GM23248 (cell line): ENCODE measurements at regions of chr2 and their contacts with region 1.

Region 1: DNA sequence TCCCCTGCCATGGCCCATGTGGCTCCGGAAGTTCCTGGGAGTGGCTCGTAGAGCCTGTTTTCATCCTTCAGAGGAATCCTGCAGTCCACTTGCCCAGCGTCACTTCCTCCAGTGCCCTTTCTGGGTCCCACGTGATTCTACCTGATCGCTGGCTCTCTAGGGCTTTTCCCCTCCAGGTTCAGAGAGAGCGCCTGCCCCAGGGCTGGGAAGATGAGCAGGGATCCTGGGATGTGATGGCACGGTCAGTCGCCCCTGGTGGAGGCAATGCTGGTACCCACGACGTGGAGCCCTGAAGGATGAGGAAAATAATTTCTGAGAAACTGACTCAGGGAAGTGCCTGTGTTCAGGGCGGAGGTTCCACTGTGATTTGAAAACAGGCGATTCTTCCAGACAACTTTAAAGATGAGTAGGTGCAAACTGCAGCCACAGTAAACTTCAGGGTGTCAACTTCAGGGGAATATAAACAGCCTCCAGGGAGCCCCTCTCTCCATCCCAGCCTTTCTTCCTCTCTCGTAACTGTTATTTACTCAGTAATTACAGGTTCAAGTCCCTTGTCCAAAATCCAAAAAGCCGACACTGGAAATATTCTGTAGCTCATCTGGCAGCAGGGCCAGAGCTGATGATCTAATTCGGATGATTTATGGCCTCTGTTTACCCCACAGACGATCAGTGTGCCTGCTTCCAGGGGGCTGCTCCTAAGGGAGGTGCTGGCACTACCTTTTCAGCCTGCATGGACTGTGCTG is 105.9 kb downstream of the AGAP1 start:
- DNase-seq: no peak
- H3K4me3 ChIP-seq: no peak overlapping the region
- H3K27ac ChIP-seq: no peak overlapping the region
- H3K4me1 ChIP-seq: peaks cover under 1% of the 10 kb centered on the region; the same call in 1 of the 2 replicates
- H3K27me3 ChIP-seq: no peaks in the 10 kb centered on the region

Region 2: GRCh38 chr2:235740821-235741220 is 141.1 kb after region 1 on chr2:
- in situ Hi-C with region 1: loop called (anchors 5 kb)
- DNase-seq: no peak
- H3K4me3 ChIP-seq: no peak overlapping the region
- H3K27ac ChIP-seq: no peak overlapping the region
- H3K4me1 ChIP-seq: no peaks in the 10 kb centered on the region
- H3K27me3 ChIP-seq: no peaks in the 10 kb centered on the region